AG04450 (cell line): ENCODE measurements at regions of chr9 and their contacts with region 1.

Region 1: GRCh38 chr9:34591248-34591916 is 1.9 kb upstream of the CNTFR start:
- DNase-seq: peak; percentile 32
- H3K4me3 ChIP-seq: no peak overlapping the region
- H3K27ac ChIP-seq: no peak overlapping the region
- H3K27me3 ChIP-seq: peaks cover 74% of the 10 kb centered on the region
- CTCF ChIP-seq: peak; percentile 85

Region 2: DNA sequence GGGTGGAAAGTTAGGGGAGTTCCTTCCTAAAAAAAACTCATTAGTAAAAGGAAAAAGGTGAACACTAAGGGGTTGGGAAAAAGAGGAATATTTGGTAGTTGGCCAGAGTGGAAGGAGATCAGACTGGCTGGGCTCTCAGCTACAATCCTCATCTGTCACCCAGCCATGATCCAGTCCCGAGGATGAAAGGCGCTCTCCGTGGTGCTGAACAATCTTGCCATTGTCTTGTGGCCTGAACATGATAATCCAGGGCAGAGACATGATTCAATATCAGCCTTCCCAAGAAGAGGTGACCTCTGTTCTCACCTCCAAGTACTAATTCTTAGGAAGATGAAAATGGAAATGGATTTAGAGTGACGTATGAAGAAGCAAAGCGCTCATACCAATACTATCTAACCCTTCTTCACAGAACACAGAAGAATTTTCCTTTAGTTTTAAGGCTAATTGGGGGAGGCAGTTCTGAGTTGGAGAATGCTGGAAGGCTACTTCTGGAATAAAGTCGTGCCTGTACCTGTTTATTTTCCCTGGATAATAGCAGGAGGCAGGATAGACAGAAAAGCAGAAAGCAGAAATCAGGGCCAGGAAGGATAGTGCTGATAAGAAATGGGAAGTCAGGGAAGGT is 178.0 kb before region 1 on chr9:
- CTCF ChIA-PET with region 1: interaction called, 11 read pairs
- POLR2A ChIA-PET with region 1: no interaction called
- DNase-seq: peak; percentile 7
- H3K4me3 ChIP-seq: no peak overlapping the region
- H3K27ac ChIP-seq: no peak overlapping the region
- H3K27me3 ChIP-seq: no peaks in the 10 kb centered on the region
- CTCF ChIP-seq: no peak

Region 3: GRCh38 chr9:34437006-34437925 is 154.1 kb before region 1 on chr9:
- CTCF ChIA-PET with region 1: interaction called, 14 read pairs
- POLR2A ChIA-PET with region 1: no interaction called
- DNase-seq: no peak
- H3K4me3 ChIP-seq: no peak overlapping the region
- H3K27ac ChIP-seq: no peak overlapping the region
- H3K27me3 ChIP-seq: no peaks in the 10 kb centered on the region
- CTCF ChIP-seq: peak; percentile 87

Region 4: GRCh38 chr9:34546834-34547827 is 44.3 kb before region 1 on chr9:
- CTCF ChIA-PET with region 1: interaction called, 110 read pairs
- POLR2A ChIA-PET with region 1: interaction called, 4 read pairs
- DNase-seq: peak; percentile 10
- H3K4me3 ChIP-seq: no peak overlapping the region
- H3K27ac ChIP-seq: no peak overlapping the region
- H3K27me3 ChIP-seq: peaks cover 10% of the 10 kb centered on the region
- CTCF ChIP-seq: peak; percentile 63

Region 5: DNA sequence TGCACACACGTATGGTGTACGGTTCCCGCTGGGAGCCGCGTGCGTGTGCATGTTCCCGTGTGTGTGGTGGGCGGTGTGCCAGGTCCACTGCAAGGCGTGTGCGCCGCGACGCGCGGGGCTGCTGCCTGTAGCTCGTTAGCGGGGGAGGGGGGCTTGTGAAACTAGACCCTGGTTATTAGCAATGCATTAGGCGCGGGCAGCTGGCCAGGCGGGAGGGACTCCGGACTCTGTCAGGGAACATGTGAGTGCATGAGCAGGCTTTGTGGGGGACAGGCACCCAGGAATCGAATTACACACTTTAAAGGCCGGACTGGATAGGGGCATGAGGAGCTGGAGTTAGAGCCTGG is 36.4 kb before region 1 on chr9:
- CTCF ChIA-PET with region 1: interaction called, 110 read pairs
- POLR2A ChIA-PET with region 1: no interaction called
- DNase-seq: no peak
- H3K4me3 ChIP-seq: no peak overlapping the region
- H3K27ac ChIP-seq: no peak overlapping the region
- H3K27me3 ChIP-seq: peaks cover 48% of the 10 kb centered on the region
- CTCF ChIP-seq: no peak

Region 6: DNA sequence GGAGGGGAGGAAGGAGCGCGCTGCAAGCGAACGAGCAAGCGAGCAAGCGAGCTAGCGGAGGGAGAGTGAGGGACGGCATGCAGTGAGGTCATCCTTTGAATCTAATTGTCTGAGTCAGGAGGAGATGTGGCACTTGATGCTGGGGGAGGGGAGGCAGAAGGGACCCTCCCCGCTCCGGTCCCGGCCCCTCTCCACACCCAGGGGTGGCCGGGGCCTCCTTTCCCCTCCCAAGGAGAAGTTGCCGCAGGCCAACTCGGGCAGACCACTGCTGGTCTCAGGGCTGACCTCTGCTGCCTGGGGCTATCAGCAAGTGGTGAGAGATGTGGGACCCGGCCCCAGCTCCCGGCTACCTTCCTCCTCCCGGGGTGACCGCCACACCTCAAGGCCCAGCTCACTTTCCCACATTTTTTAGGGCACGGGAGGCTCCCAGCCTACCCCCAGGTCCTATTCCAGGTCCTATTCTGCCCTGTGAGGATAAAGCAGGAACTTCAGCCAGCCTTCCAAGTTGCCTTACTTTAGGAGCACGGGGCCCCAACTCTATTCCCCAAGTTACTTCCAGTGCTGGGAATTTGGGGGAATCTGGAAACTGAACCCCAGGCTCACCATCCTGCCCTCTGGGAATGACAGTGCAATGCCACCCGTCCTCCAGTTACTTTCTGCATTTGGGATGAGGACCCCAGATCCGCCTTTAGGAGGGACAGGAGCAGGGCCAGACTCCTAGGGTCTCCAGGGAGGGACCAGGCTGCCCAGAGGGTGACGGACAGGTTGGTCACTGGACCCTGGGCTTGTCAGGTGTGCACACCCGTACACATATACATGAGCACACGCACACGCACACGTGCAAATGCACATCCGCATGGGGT is 12.9 kb before region 1 on chr9:
- CTCF ChIA-PET with region 1: interaction called, 42 read pairs
- POLR2A ChIA-PET with region 1: no interaction called
- DNase-seq: no peak
- H3K4me3 ChIP-seq: no peak overlapping the region; the same call in 1 of the 2 replicates
- H3K27ac ChIP-seq: no peak overlapping the region
- H3K27me3 ChIP-seq: peaks cover 84% of the 10 kb centered on the region
- CTCF ChIP-seq: no peak

Region 7: DNA sequence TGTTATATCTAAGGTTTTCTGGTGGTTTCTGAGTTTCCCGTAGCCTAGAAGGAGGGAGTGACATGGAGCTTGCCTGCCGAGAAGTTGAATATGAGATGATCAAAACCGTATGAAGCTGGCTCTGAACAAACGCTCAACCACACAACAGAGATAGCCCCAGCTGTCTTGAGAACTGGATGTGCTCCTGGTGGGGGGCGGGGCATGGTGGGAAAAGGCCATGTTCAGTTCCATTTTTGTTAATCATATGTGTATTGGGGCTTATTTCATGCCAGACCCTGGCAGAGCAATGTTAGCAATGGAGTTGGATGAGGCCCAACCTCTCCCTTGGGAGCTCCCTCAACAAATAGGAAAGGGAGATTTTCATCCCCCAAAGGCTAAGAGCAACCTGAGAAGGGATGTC is 94.8 kb after region 1 on chr9:
- CTCF ChIA-PET with region 1: no interaction called
- POLR2A ChIA-PET with region 1: no interaction called
- DNase-seq: no peak
- H3K4me3 ChIP-seq: no peak overlapping the region
- H3K27ac ChIP-seq: no peak overlapping the region
- H3K27me3 ChIP-seq: no peaks in the 10 kb centered on the region
- CTCF ChIP-seq: no peak